BJ (cell line): ENCODE measurements at regions of chr12 and their contacts with region 1.

Region 1: DNA sequence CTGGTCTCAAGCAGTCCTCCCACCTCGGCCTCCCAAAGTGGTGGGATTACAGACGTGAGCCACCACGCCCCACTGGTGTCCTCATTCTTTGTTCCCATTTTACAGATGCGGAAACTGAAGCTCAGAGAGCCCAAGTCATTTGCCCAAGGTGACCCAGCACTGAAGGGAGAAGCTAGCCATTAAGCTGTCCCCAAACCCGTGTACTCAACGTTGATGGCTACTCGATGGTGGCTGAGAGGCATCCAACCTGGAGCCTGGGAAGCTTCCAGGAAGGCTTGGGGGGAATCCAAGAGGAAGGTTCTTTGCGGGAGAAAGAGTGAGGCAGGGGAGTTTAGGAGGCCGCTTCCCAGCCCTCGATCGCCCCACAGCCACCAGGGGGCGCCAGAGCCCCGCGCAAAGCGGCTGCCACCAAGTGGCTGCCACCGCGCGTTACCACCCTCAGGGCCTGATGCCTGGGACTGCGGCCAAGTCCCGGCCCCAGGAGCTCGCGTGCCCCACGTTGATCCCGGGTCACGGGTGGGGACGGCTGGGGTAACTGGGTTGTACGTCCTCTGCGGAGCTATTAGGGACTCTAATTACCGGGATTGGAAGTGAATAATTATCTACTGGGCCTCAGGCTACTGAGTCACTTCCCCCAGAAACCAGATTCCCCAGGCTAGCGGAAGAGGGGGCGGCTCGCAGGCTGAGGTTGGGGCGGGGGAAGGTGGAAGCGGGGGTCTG is 8.8 kb upstream of the SH2B3 start:
- DNase-seq: peak; percentile 49
- H3K4me3 ChIP-seq: peak overlapping the region; percentile 2; the same call in 1 of the 2 replicates
- H3K27me3 ChIP-seq: no peaks in the 10 kb centered on the region
- CTCF ChIP-seq: peak; percentile 99

Region 2: GRCh38 chr12:110431957-110432587 is 964.8 kb before region 1 on chr12:
- CTCF ChIA-PET with region 1: no interaction called
- POLR2A ChIA-PET with region 1: no interaction called
- DNase-seq: no peak
- H3K4me3 ChIP-seq: peak overlapping the region; percentile 40; the same call in 1 of the 2 replicates
- H3K27me3 ChIP-seq: no peaks in the 10 kb centered on the region
- CTCF ChIP-seq: no peak

Region 3: GRCh38 chr12:111379942-111380554 is 16.8 kb before region 1 on chr12:
- CTCF ChIA-PET with region 1: interaction called, 41 read pairs
- POLR2A ChIA-PET with region 1: no interaction called
- DNase-seq: no peak
- H3K4me3 ChIP-seq: no peak overlapping the region
- H3K27me3 ChIP-seq: 0 out of 2 replicates have a peak, but pooled peaks cover 1% of the 10 kb centered on the region
- CTCF ChIP-seq: no peak

Region 4: GRCh38 chr12:111434680-111435338 is 37.9 kb after region 1 on chr12:
- CTCF ChIA-PET with region 1: interaction called, 25 read pairs
- POLR2A ChIA-PET with region 1: interaction called, 3 read pairs
- DNase-seq: no peak
- H3K4me3 ChIP-seq: no peak overlapping the region; the same call in 1 of the 2 replicates
- H3K27me3 ChIP-seq: no peaks in the 10 kb centered on the region
- CTCF ChIP-seq: no peak

Region 5: GRCh38 chr12:111471236-111471635 is 74.3 kb after region 1 on chr12:
- CTCF ChIA-PET with region 1: interaction called, 25 read pairs
- POLR2A ChIA-PET with region 1: no interaction called
- DNase-seq: no peak
- H3K4me3 ChIP-seq: no peak overlapping the region
- H3K27me3 ChIP-seq: no peaks in the 10 kb centered on the region
- CTCF ChIP-seq: no peak

Region 6: GRCh38 chr12:111529424-111530368 is 132.8 kb after region 1 on chr12:
- CTCF ChIA-PET with region 1: interaction called, 23 read pairs
- POLR2A ChIA-PET with region 1: no interaction called
- DNase-seq: peak; percentile 6
- H3K4me3 ChIP-seq: no peak overlapping the region
- H3K27me3 ChIP-seq: no peaks in the 10 kb centered on the region
- CTCF ChIP-seq: peak; percentile 74